Posterior vena cava (tissue), 2 donors: ENCODE measurements at regions of chr2 and their contacts with region 1.

Region 1: DNA sequence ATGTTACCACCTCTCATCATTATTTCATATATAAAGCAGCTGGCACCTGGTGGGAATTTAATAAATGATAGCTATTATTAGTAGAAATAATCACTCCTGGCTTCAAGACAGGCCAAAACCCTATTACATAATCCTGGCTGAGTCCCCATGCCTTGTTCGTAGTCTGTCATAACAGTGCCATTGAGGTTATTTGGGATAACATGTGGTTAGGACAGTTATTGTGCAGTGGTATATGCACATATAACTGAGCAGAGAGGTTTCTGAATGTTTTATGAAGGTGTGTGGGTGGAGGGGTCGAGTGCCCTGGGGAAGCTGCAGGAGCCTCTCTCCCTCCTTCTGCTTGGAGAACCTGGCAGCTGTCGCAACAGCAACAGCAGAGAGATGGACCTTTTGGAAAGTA is 162.4 kb upstream of the NABP1 start:
- DNase-seq: no peak

Region 2: DNA sequence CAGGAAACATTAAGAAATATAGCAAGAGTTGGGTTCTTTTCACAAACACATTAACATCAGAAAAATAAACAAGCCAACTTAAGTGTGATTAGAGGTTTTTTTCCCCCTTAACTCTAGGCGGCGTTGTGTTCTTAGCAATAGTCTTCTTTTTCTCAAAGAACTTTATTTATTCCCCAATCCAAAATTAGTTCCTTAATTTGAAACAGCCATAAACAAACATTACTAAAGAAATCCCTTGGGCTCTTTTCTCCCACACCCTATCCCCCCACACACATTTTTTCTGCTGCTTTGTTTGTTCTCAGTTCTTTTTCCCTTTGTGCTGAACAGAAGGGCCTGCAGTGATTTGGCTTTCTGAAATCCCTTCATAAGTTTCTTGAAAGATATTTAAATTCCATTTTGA is 283.6 kb before region 1 on chr2:
- intact Hi-C with region 1: loop called in 1 of 2 experiments (anchors 2 kb)
- DNase-seq: no peak